GM12878 (cell line): ENCODE measurements at regions of chr6 and their contacts with region 1.

Region 1: GRCh38 chr6:43059168-43060033 is at the starts of genes KLC4 and MRPL2:
- DNase-seq: peak; percentile 97
- ATAC-seq: peak; percentile 98
- H3K4me3 ChIP-seq: peak within 1 kb of the TSS; percentile 95
- H3K27ac ChIP-seq: peak within 1 kb of the TSS; percentile 87
- H3K4me1 ChIP-seq: peaks cover 3% of the 10 kb centered on the region; the same call in 1 of the 2 replicates
- H3K27me3 ChIP-seq: no peaks in the 10 kb centered on the region
- CTCF ChIP-seq: no peak
- EP300 ChIP-seq: no peak
- POLR2A ChIP-seq: peak; percentile 94
- RAD21 ChIP-seq: no peak
- polyA plus RNA-seq, gene KLC4: 0.90 to 2.4 TPM
- polyA plus RNA-seq, gene MRPL2: 29.7 to 42.1 TPM

Region 2: GRCh38 chr6:43021270-43022047 is 37.9 kb before region 1 on chr6 and contains the start of gene RRP36:
- CTCF ChIA-PET with region 1: interaction called, 3 read pairs
- POLR2A ChIA-PET with region 1: interaction called, 12 read pairs
- RAD21 ChIA-PET with region 1: interaction called, 4 read pairs
- SMC1A ChIA-PET with region 1: interaction called, 3 read pairs
- in situ Hi-C with region 1: no loop called
- intact Hi-C with region 1: no loop called
- DNase-seq: no peak
- ATAC-seq: peak; percentile 98
- H3K4me3 ChIP-seq: peak within 1 kb of the TSS; percentile 100
- H3K27ac ChIP-seq: peak within 1 kb of the TSS; percentile 77
- H3K4me1 ChIP-seq: peaks cover 14% of the 10 kb centered on the region
- H3K27me3 ChIP-seq: no peaks in the 10 kb centered on the region
- CTCF ChIP-seq: no peak
- EP300 ChIP-seq: no peak
- POLR2A ChIP-seq: peak; percentile 83
- RAD21 ChIP-seq: no peak
- polyA plus RNA-seq, gene RRP36: 17.6 to 34.7 TPM